ENCODE measurements at regions of chr9 and their contacts with region 1.

Region 1: DNA sequence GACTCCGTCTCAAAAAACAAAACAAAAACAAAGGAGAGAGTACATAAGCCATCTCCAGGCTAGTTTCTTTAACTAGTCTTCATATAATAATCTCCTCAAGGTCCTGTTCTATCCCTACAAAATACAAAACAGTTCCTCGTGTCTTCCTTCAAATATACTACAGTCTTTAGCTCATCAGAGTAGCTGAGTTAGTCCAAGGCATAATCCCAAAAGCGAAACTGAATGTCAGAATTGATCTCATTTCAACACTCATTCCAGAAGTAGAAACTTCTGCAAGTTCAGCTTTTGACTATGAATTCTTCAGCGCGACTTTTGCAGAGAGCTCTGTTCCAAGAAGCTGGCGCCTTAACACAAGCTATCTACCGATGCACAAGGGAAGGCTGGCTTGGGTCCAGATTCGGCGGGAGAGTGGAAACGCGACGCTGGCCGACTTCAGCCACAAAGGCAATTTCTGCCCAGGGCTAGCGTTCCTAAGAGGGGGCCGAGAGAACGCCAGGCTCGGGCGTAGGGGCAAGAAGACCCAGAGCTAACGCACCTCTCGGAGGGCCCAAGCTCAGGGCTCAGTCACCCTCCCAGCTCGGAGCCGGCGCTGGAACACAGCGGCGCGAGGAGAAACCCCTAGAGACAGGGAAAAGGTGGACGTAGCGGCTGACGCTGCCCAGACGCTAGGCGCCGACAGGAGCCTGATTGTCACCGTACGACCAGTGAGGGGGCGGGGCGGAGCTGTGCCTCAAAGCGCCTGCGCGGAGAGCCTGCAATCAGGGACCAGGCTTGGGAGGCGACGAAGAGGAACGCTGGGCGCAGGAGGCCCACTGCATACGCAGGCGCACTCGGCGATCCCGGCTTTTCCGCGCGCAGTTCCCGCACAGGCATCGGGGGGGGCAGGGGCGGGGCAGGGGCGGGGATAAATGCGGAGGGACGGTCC is 469 bp upstream of the HSDL2 start:
- DNase-seq: peak; percentile 96
- ATAC-seq: peak; percentile 91
- H3K4me3 Mint-ChIP-seq: peak overlapping the region; percentile 99
- H3K27ac Mint-ChIP-seq: peak overlapping the region; percentile 95
- H3K4me1 Mint-ChIP-seq: peaks cover 59% of the 10 kb centered on the region
- H3K27me3 Mint-ChIP-seq: no peaks in the 10 kb centered on the region
- CTCF ChIP-seq: no peak

Region 2: GRCh38 chr9:111483862-111484571 is 895.4 kb before region 1 on chr9 and contains the start of gene ECPAS:
- CTCF ChIA-PET with region 1: no interaction called
- POLR2A ChIA-PET with region 1: interaction called, 6 read pairs
- intact Hi-C with region 1: loop called (anchors 5 kb)
- DNase-seq: peak; percentile 77
- ATAC-seq: peak; percentile 66
- H3K4me3 Mint-ChIP-seq: peak within 1 kb of the TSS; percentile 88
- H3K27ac Mint-ChIP-seq: peak within 1 kb of the TSS; percentile 86
- H3K4me1 Mint-ChIP-seq: peaks cover 26% of the 10 kb centered on the region
- H3K27me3 Mint-ChIP-seq: peaks cover 4% of the 10 kb centered on the region
- CTCF ChIP-seq: no peak
- total RNA-seq, gene ECPAS: 74.2 and 81.9 TPM in 2 replicates

Region 3: GRCh38 chr9:111661150-111661801 is 718.2 kb before region 1 on chr9 and contains the start of gene GNG10:
- CTCF ChIA-PET with region 1: no interaction called
- POLR2A ChIA-PET with region 1: no interaction called
- intact Hi-C with region 1: loop called (anchors 2 kb)
- DNase-seq: peak; percentile 76
- ATAC-seq: peak; percentile 96
- H3K4me3 Mint-ChIP-seq: peak within 1 kb of the TSS; percentile 95
- H3K27ac Mint-ChIP-seq: peak within 1 kb of the TSS; percentile 85
- H3K4me1 Mint-ChIP-seq: peaks cover 27% of the 10 kb centered on the region
- H3K27me3 Mint-ChIP-seq: no peaks in the 10 kb centered on the region
- CTCF ChIP-seq: no peak
- total RNA-seq, gene GNG10: 9.3 and 10.2 TPM in 2 replicates

Region 4: GRCh38 chr9:112288029-112288428 is 91.4 kb before region 1 on chr9:
- CTCF ChIA-PET with region 1: no interaction called
- POLR2A ChIA-PET with region 1: no interaction called
- intact Hi-C with region 1: no loop called
- DNase-seq: no peak
- ATAC-seq: no peak
- H3K4me3 Mint-ChIP-seq: no peak overlapping the region
- H3K27ac Mint-ChIP-seq: no peak overlapping the region
- H3K4me1 Mint-ChIP-seq: peaks cover 22% of the 10 kb centered on the region
- H3K27me3 Mint-ChIP-seq: no peaks in the 10 kb centered on the region
- CTCF ChIP-seq: no peak

Region 5: GRCh38 chr9:112433499-112434392 is 54.3 kb after region 1 on chr9:
- CTCF ChIA-PET with region 1: no interaction called
- POLR2A ChIA-PET with region 1: no interaction called
- intact Hi-C with region 1: no loop called
- DNase-seq: no peak
- ATAC-seq: no peak
- H3K4me3 Mint-ChIP-seq: no peak overlapping the region
- H3K27ac Mint-ChIP-seq: no peak overlapping the region
- H3K4me1 Mint-ChIP-seq: no peaks in the 10 kb centered on the region
- H3K27me3 Mint-ChIP-seq: no peaks in the 10 kb centered on the region
- CTCF ChIP-seq: no peak

Region 6: GRCh38 chr9:112486221-112487007 is 107.0 kb after region 1 on chr9 and contains the start of gene KIAA1958:
- CTCF ChIA-PET with region 1: no interaction called
- POLR2A ChIA-PET with region 1: interaction called, 23 read pairs
- intact Hi-C with region 1: loop called (anchors 1 kb)
- DNase-seq: peak; percentile 75
- ATAC-seq: peak; percentile 89
- H3K4me3 Mint-ChIP-seq: peak within 1 kb of the TSS; percentile 97
- H3K27ac Mint-ChIP-seq: peak within 1 kb of the TSS; percentile 89
- H3K4me1 Mint-ChIP-seq: peaks cover 19% of the 10 kb centered on the region
- H3K27me3 Mint-ChIP-seq: no peaks in the 10 kb centered on the region
- CTCF ChIP-seq: no peak
- total RNA-seq, gene KIAA1958: 5.8 and 7.4 TPM in 2 replicates

Region 7: GRCh38 chr9:112750111-112750767 is 370.8 kb after region 1 on chr9 and contains the start of gene SNX30:
- CTCF ChIA-PET with region 1: no interaction called
- POLR2A ChIA-PET with region 1: interaction called, 6 read pairs
- intact Hi-C with region 1: loop called (anchors 1 kb)
- DNase-seq: peak; percentile 90
- ATAC-seq: peak; percentile 90
- H3K4me3 Mint-ChIP-seq: peak within 1 kb of the TSS; percentile 93
- H3K27ac Mint-ChIP-seq: peak within 1 kb of the TSS; percentile 94
- H3K4me1 Mint-ChIP-seq: peaks cover 42% of the 10 kb centered on the region
- H3K27me3 Mint-ChIP-seq: no peaks in the 10 kb centered on the region
- CTCF ChIP-seq: no peak
- total RNA-seq, gene SNX30: 6.1 and 6.5 TPM in 2 replicates

Region 8: DNA sequence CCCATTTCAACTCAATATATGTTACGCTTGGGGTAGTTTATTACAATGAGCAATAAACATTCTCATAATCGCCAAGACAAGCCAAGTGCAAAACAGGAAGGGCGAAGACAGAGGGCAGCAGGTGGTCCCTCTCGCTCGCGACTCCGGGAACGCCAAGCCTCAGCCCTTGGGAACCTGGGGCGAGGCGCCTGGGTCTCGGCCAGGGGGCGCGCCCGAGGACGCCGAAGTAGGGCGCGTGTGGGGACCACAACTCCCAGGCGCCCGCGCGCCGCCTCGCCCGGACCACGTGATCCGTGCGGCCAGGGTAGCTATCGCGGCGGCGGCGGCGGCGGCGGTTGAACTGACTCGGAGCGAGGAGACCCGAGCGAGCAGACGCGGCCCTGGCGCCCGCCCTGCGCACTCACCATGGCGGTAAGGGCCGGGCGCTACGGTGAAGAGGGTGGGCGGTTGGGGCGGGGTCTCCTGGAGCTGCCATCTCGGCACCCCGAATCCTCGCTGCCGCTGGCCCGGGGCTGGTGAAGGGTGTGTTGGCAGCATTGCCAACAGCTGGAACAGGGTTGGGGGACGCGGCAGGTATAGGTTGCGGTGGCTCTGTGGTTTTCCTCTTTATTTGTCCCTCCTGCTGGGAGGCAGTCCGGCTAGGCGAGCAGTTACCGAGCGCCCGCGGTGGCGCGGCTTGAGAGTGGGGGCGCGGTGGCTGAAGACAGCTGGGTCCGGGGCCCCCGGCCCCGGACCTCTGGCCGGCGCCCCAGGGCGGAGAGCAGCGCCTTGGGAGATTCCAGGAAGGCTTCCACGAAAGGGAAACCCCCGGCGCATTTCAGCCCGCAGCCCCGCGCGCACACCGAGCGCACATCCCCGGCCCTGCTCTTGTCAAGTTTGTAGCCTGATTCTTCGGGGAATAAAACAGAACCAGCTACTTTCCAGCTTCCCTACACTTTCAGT is 771.5 kb after region 1 on chr9 and contains the start of gene SLC31A2:
- CTCF ChIA-PET with region 1: no interaction called
- POLR2A ChIA-PET with region 1: no interaction called
- intact Hi-C with region 1: loop called (anchors 5 kb)
- DNase-seq: peak; percentile 80
- ATAC-seq: peak; percentile 94
- H3K4me3 Mint-ChIP-seq: peak within 1 kb of the TSS; percentile 84
- H3K27ac Mint-ChIP-seq: no peak within 1 kb of the TSS
- H3K4me1 Mint-ChIP-seq: peaks cover 13% of the 10 kb centered on the region
- H3K27me3 Mint-ChIP-seq: peaks cover 2% of the 10 kb centered on the region
- CTCF ChIP-seq: no peak
- total RNA-seq, gene SLC31A2: 0.93 and 1.1 TPM in 2 replicates